ENCODE measurements at regions of chr5 and their contacts with region 1.

Region 1: GRCh38 chr5:167723254-167723871 is 568.1 kb upstream of the WWC1 start:
- DNase-seq: peak; percentile 10 to 91 (median 76)

Region 2: GRCh38 chr5:168219515-168220410 is 496.4 kb after region 1 on chr5:
- intact Hi-C with region 1: loop called (anchors 2 kb)
- DNase-seq: peak in 33 of 42 donors; percentile 30 to 88 (median 62)